ENCODE measurements at regions of chr1 and their contacts with region 1.

Region 1: GRCh38 chr1:25904943-25905679 is 1.1 kb downstream of the STMN1 start:
- DNase-seq: peak; percentile 73 to 94
- H3K4me3 ChIP-seq: peak overlapping the region; percentile 76 to 100 (median 93)
- H3K27ac ChIP-seq: peak overlapping the region; percentile 24; the same call in 1 of the 2 replicates
- H3K4me1 ChIP-seq: peaks cover 5 to 11% (median 8%) of the 10 kb centered on the region in 4 experiments; a peak in 6 of 7 replicates
- H3K27me3 ChIP-seq: no peaks in the 10 kb centered on the region
- CTCF ChIP-seq: 0 out of 4 replicates have a peak, but pooled peaks of 1 of the 3 experiments have one; percentile 2
- EP300 ChIP-seq: no peak
- POLR2A ChIP-seq: no peak
- RAD21 ChIP-seq: no peak

Region 2: DNA sequence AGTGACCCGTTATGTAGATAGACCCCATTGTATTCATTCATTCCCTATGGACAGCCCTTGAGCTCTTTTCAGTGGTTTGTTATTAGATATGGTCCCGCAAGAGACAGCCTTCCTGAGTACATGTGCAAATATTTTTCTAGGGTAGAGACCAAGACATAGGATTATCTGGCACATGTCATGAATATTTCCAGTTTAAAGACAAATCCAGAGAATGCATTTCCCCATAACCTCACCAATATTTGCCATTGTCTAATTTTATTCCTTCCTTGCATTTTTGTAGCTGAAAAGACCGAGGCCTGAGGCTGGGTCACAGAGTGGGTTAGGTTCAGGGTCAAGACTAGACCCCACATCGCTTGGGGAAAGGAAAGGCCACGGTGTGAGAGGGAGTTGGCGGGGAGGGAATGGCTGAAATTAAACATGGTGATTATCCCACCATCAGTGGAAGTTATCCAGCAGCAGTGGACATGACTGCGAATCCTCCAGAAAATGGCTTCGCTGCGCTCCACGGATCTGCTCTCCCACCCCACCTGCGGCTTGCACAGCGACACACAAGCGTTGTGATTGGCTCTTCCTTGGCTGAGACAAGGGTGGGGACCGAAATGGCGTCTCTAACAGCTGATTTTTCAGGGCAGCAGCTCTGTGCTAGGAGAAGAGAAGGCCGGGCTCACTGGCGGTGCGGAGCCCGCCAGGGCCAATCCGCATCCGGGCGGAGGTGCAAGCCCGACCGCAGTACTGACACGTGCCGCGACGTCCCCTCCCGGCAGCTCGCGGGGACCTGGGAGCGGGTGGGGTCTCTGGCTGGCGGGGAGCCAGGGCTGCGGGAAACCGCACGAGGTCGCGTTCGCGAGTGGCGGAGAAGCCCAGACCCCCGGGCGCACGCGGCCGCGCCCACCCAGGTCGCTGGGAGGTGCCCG is 17.2 kb after region 1 on chr1:
- CTCF ChIA-PET with region 1: interaction called, 5 read pairs
- POLR2A ChIA-PET with region 1: interaction called, 33 read pairs
- DNase-seq: no peak
- H3K4me3 ChIP-seq: peak overlapping the region; percentile 46 to 69 (median 58)
- H3K27ac ChIP-seq: no peak overlapping the region
- H3K4me1 ChIP-seq: peaks cover 6 to 20% (median 13%) of the 10 kb centered on the region in 4 experiments
- H3K27me3 ChIP-seq: peaks cover 0 to 6% (median 2%) of the 10 kb centered on the region in 4 experiments; a peak in 4 of 7 replicates
- CTCF ChIP-seq: no peak
- EP300 ChIP-seq: no peak
- POLR2A ChIP-seq: peak in 1 of 2 experiments; percentile 15; a peak in 1 of 3 replicates
- RAD21 ChIP-seq: no peak

Region 3: GRCh38 chr1:25927521-25928265 is 22.6 kb after region 1 on chr1:
- CTCF ChIA-PET with region 1: no interaction called
- POLR2A ChIA-PET with region 1: interaction called, 33 read pairs
- DNase-seq: no peak
- H3K4me3 ChIP-seq: no peak overlapping the region
- H3K27ac ChIP-seq: no peak overlapping the region
- H3K4me1 ChIP-seq: peaks cover 4 to 12% (median 7%) of the 10 kb centered on the region in 4 experiments
- H3K27me3 ChIP-seq: peaks cover 0 to 4% (median 0%) of the 10 kb centered on the region in 4 experiments; a peak in 2 of 7 replicates
- CTCF ChIP-seq: no peak
- EP300 ChIP-seq: no peak
- POLR2A ChIP-seq: no peak
- RAD21 ChIP-seq: no peak

Measured in H1 (cell line).